ENCODE measurements at regions of chr1 and their contacts with region 1.

Region 1: DNA sequence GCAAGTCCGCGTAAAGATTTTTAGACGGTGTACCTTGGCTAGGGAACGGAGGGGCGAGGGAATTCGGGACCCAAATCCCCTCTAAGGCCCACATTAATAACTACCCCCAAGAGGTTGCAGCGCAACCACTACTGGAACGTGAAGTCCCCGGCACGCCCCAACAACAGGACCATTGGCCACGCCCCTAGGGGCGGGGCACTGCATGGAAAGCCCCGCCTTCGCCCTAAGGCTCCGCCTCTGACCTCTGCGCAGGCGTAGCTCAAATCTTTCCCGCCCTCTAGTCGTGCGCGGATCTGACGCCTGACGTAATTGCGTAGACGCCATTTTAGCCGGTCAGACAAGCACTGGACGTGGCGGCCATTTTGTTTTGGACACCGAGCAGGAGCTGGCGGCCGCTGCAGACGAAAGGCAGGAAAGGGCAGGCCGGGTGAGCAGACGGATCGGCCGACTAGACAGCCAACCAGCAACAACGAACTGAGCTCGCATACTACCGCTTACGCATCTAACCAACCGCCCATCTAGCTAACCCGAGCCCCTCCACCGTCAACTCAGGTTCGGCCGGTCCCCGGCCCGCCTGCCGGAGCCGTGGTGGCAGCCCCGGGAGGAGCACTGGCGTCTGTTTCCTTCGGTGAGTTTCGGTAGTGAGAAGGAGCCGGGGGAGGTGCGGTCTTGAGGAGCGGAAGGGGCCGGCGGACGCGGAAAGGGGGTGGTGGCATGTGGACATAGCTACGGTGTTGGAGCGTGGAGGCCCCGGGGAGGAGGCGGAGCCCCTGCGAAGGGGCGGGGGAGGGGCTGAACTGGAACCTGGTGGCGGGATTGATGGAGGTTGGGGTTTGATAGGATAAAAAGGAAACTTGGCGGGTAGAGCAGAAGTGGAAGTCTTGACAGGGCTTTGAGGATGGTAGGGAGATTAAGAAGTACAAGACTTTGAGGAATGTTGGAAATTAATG is at the start of gene CHTOP:
- DNase-seq: peak; percentile 89 to 98 (median 96)
- H3K4me3 ChIP-seq: peak within 1 kb of the TSS; percentile 99
- H3K4me3 Mint-ChIP-seq: peak within 1 kb of the TSS; percentile 97 to 100 (median 99)
- H3K27ac ChIP-seq: peak within 1 kb of the TSS; percentile 100
- H3K27ac Mint-ChIP-seq: peak within 1 kb of the TSS; percentile 97 to 100 (median 100)
- H3K4me1 ChIP-seq: peaks cover 31% of the 10 kb centered on the region
- H3K4me1 Mint-ChIP-seq: peaks cover 29 to 48% (median 44%) of the 10 kb centered on the region in 3 donors
- H3K27me3 ChIP-seq: no peaks in the 10 kb centered on the region
- H3K27me3 Mint-ChIP-seq: peaks cover 0 to 2% of the 10 kb centered on the region in 2 donors
- total RNA-seq, gene CHTOP: 95.9 to 98.9 TPM

Region 2: DNA sequence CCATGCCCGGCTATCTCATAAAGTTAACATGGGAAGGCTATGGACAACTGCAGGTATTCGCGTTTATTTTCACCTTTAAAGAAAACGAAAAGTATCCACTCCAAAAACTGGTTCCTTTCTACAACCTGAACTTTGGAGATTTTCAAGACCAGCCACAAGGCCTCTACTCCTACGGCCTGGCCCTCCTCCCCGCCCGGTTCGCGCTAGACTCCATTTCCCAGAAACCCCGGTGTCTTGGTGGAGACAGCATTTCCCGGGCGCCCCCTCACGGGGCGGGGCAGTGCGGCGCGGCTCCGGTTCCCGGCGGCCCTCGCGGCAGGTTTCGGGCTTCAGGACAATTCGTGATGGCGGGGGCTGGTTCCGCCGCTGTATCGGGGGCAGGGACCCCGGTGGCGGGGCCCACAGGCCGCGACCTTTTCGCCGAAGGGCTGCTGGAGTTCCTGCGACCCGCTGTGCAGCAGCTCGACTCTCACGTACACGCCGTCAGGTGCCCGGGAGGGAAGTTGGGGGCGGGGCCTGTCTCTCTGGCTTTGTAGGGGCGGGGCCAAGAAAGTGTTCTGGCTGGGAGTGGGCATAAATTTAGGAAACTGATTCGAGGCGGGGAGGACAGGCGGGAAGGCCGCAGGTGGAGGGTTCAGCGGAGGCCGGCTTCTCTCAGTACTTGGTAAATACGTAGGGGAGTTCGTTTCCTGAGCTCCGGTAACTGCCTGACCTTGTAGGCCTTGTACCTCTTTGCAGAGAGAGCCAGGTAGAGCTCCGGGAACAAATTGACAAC is 24.6 kb after region 1 on chr1 and contains the start of gene SNAPIN:
- CTCF ChIA-PET with region 1: interaction called, 3 read pairs
- POLR2A ChIA-PET with region 1: interaction called, 18 read pairs
- DNase-seq: peak; percentile 82 to 91 (median 84)
- H3K4me3 ChIP-seq: peak within 1 kb of the TSS; percentile 91
- H3K4me3 Mint-ChIP-seq: peak within 1 kb of the TSS; percentile 94 to 97 (median 96)
- H3K27ac ChIP-seq: peak within 1 kb of the TSS; percentile 86
- H3K27ac Mint-ChIP-seq: peak within 1 kb of the TSS; percentile 87 to 98 (median 96)
- H3K4me1 ChIP-seq: peaks cover 18% of the 10 kb centered on the region
- H3K4me1 Mint-ChIP-seq: peaks cover 13 to 21% (median 18%) of the 10 kb centered on the region in 3 donors
- H3K27me3 ChIP-seq: no peaks in the 10 kb centered on the region
- H3K27me3 Mint-ChIP-seq: no peaks in the 10 kb centered on the region
- total RNA-seq, gene SNAPIN: 36.7 to 39.0 TPM

Region 3: DNA sequence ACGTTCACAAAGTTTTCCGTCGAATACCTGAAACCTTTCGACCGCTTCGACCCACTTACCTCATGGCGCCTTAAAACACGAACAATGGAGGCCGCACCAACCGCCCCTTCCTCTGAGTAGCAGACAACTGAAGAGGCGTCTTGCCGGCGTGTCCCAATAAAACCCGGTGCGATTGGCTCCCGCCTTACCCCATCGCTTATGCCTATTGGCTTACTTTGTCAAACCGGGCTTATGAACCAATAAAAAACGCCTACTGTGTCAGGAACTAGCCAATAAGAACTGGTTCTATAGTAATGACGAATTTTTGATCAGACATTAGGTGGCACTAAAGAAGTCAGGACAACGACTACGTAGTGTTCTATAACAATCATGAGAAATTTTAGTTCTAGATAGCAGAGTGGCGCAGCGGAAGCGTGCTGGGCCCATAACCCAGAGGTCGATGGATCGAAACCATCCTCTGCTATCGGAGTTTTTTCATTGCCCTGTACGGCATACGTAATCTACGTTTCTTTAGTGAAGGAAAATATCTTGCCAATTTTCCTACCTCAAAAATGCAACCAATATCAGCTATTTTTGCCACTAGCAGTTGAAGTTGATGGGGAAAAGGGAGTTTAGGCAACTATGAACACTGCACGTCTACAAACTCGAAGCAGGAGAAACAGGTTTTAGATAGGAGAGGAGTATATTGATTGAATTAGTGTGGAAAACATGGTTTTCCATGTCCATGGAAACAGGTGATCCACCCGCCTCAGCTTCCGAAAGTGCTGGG is 37.1 kb after region 1 on chr1 and contains the start of gene ILF2:
- CTCF ChIA-PET with region 1: no interaction called
- POLR2A ChIA-PET with region 1: interaction called, 18 read pairs
- DNase-seq: peak; percentile 92 to 98 (median 98)
- H3K4me3 ChIP-seq: peak within 1 kb of the TSS; percentile 92
- H3K4me3 Mint-ChIP-seq: no peak within 1 kb of the TSS
- H3K27ac ChIP-seq: peak within 1 kb of the TSS; percentile 92
- H3K27ac Mint-ChIP-seq: peak within 1 kb of the TSS in 1 of 8 donors; percentile 93
- H3K4me1 ChIP-seq: peaks cover 30% of the 10 kb centered on the region
- H3K4me1 Mint-ChIP-seq: peaks cover 11 to 21% (median 12%) of the 10 kb centered on the region in 3 donors
- H3K27me3 ChIP-seq: no peaks in the 10 kb centered on the region
- H3K27me3 Mint-ChIP-seq: peaks cover 0 to under 1% of the 10 kb centered on the region in 2 donors
- total RNA-seq, gene ILF2: 379 to 394 TPM